T-cell (primary cell): ENCODE measurements at regions of chr6 and their contacts with region 1.

Region 1: DNA sequence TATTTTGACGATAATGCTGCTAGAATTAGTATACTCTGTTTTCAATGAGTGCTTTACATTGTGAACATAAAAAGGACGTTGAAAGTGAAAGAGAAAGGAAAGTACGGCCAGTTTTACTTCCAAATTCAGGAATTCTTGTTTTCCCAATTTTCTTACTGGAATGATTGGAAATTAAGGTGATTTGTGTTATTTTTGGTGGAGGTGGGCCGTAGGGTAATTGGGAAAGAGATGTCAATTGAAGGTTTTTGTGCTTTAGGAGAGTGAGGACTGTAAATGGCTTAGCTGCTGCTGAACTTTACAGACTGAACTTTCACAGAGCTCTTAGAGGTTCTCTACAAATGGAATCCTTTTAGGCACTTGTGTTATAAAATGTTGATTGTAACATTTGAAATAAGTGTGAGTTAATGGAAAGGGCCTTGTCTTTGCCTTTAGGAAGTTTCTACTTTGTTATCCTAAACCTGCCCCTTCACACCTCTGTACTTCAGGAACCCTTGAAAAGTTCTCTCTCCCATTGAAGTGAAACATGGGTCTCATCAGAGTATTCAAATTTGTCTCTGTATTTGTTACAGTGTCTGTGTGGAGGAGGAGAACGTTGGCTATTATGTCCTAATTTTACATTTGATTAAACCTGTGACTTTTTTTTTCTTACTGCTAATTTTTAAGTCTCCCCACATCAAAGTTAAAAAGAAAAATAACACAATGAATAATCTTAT is 256.4 kb downstream of the ARID1B start:
- DNase-seq: peak in 2 of 35 experiments; percentile 10 to 34
- ATAC-seq: peak in 3 of 4 experiments; percentile 48 to 61 (median 58)
- H3K4me3 ChIP-seq: peak overlapping the region; percentile 46 to 51
- H3K4me3 Mint-ChIP-seq: peak overlapping the region; percentile 74 to 93 (median 91)
- H3K27ac ChIP-seq: peak overlapping the region; percentile 86
- H3K27ac Mint-ChIP-seq: peak overlapping the region; percentile 95
- H3K4me1 ChIP-seq: peaks cover 2 to 20% of the 10 kb centered on the region in 2 experiments
- H3K4me1 Mint-ChIP-seq: peaks cover 36 to 46% (median 42%) of the 10 kb centered on the region in 3 donors
- H3K27me3 ChIP-seq: no peaks in the 10 kb centered on the region
- H3K27me3 Mint-ChIP-seq: no peaks in the 10 kb centered on the region

Region 2: GRCh38 chr6:156976216-156977127 is 57.1 kb before region 1 on chr6:
- CTCF ChIA-PET with region 1: no interaction called
- POLR2A ChIA-PET with region 1: no interaction called
- DNase-seq: peak in 4 of 35 experiments; percentile 10 to 23 (median 20)
- ATAC-seq: peak in 2 of 4 experiments; percentile 19 to 61
- H3K4me3 ChIP-seq: peak overlapping the region; percentile 15 to 33
- H3K4me3 Mint-ChIP-seq: peak overlapping the region; percentile 70 to 79 (median 77)
- H3K27ac ChIP-seq: no peak overlapping the region
- H3K27ac Mint-ChIP-seq: peak overlapping the region; percentile 22 to 33
- H3K4me1 ChIP-seq: peaks cover 8 to 25% of the 10 kb centered on the region in 2 experiments
- H3K4me1 Mint-ChIP-seq: peaks cover 89 to 98% (median 91%) of the 10 kb centered on the region in 3 donors
- H3K27me3 ChIP-seq: no peaks in the 10 kb centered on the region
- H3K27me3 Mint-ChIP-seq: no peaks in the 10 kb centered on the region

Region 3: DNA sequence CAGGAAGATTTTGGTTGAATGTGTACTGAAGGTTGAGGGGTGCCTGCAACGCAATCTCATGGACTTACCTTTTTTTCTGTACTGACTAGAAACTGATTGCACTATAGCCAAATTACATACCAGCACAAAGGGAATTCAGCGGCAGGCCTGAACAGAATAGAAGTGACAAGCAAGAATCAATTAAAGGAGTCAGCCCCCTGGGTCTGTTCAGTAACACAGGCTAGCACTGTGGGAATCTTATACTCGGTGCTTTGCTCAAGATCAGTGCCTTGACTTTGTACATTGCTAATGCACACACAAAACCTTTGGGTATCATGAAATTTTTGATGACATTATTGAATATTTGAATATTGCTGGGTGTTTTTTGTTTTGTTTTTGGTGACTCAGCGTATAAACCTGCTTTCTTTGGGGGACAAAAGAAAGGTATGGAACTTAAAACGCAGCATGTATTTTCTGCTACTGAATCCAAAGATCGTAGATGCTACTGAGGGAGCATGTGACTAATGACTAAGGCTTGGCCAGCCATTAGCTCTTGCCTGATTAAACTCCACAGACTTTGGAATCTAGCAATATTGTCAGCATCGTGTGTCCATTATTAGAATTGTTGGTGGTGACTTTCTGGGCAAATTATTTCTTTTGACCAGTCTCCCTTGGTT is 19.8 kb before region 1 on chr6:
- CTCF ChIA-PET with region 1: no interaction called
- POLR2A ChIA-PET with region 1: no interaction called
- DNase-seq: no peak
- ATAC-seq: no peak
- H3K4me3 ChIP-seq: no peak overlapping the region
- H3K4me3 Mint-ChIP-seq: no peak overlapping the region
- H3K27ac ChIP-seq: no peak overlapping the region
- H3K27ac Mint-ChIP-seq: no peak overlapping the region
- H3K4me1 ChIP-seq: no peaks in the 10 kb centered on the region
- H3K4me1 Mint-ChIP-seq: peaks cover 64 to 76% (median 76%) of the 10 kb centered on the region in 3 donors
- H3K27me3 ChIP-seq: no peaks in the 10 kb centered on the region
- H3K27me3 Mint-ChIP-seq: no peaks in the 10 kb centered on the region

Region 4: DNA sequence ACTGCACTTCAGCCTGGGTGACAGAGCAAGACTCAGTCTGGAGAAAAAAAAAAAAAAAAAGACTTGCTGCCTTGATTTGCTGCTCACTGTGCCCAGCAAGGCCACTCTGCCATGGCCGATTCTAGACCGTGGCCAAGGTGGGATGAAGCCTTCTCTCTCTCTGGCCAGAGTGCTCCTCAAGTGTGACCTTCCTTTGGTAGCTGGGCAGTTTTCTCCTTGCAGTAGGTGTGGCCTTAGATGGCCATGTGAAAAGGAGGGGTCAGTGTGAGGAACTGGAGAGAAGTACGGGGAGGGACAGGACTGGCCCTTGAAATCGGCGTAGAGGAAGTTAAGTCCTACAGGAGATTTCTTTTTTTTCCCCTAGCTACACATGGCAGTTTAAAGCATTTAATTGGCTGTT is 15.5 kb after region 1 on chr6:
- CTCF ChIA-PET with region 1: interaction called, 4 to 8 read pairs
- POLR2A ChIA-PET with region 1: interaction called, 3 to 10 read pairs
- DNase-seq: no peak
- ATAC-seq: no peak
- H3K4me3 ChIP-seq: no peak overlapping the region
- H3K4me3 Mint-ChIP-seq: no peak overlapping the region
- H3K27ac ChIP-seq: no peak overlapping the region
- H3K27ac Mint-ChIP-seq: no peak overlapping the region
- H3K4me1 ChIP-seq: peaks cover 1 to 4% of the 10 kb centered on the region in 2 experiments
- H3K4me1 Mint-ChIP-seq: peaks cover 18 to 30% (median 22%) of the 10 kb centered on the region in 3 donors
- H3K27me3 ChIP-seq: no peaks in the 10 kb centered on the region
- H3K27me3 Mint-ChIP-seq: no peaks in the 10 kb centered on the region

Region 5: DNA sequence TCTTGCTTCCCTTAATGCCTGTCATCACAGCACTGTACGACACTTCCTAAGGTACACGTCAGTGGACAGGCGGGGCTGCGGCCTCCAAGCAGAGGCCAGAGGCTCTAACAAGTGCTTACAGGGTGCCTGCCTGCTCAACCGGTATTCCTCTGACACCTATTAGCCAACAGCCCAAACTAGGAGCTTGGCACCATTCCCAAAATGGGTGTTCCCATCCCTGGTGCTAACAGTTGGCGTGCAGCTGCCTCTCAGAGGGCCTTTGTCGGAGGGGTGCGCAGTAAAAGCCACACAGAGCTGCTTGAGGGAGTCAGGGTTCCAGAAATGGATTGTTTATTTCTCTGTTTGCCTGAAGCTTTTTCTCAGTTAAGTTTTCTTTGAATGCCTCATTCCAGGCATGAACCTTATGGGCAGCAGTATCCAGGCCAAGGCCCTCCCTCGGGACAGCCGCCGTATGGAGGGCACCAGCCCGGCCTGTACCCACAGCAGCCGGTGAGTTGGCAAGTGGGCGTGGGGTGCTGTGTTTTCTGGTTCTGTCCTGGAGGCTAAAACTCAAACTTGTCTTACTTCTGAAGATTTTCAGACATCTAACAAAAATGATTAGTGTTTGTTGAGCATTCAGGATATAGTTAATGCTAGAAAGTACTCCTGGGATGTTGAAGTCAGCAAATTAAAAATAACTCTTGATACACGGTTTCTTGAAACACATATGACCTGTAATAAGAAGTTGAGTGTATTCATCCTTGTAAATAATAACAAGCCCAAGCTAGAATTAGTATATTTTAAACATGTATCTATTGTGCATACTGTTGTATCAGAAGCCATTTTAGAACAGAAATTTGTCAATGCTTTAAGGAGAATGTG is 165.1 kb after region 1 on chr6:
- CTCF ChIA-PET with region 1: no interaction called
- POLR2A ChIA-PET with region 1: no interaction called
- DNase-seq: no peak
- ATAC-seq: no peak
- H3K4me3 ChIP-seq: no peak overlapping the region
- H3K4me3 Mint-ChIP-seq: no peak overlapping the region
- H3K27ac ChIP-seq: no peak overlapping the region
- H3K27ac Mint-ChIP-seq: no peak overlapping the region
- H3K4me1 ChIP-seq: peaks cover 2 to 13% of the 10 kb centered on the region in 2 experiments
- H3K4me1 Mint-ChIP-seq: peaks cover 17 to 29% (median 23%) of the 10 kb centered on the region in 3 donors
- H3K27me3 ChIP-seq: no peaks in the 10 kb centered on the region
- H3K27me3 Mint-ChIP-seq: no peaks in the 10 kb centered on the region